ENCODE measurements at regions of chr2 and their contacts with region 1.

Region 1: DNA sequence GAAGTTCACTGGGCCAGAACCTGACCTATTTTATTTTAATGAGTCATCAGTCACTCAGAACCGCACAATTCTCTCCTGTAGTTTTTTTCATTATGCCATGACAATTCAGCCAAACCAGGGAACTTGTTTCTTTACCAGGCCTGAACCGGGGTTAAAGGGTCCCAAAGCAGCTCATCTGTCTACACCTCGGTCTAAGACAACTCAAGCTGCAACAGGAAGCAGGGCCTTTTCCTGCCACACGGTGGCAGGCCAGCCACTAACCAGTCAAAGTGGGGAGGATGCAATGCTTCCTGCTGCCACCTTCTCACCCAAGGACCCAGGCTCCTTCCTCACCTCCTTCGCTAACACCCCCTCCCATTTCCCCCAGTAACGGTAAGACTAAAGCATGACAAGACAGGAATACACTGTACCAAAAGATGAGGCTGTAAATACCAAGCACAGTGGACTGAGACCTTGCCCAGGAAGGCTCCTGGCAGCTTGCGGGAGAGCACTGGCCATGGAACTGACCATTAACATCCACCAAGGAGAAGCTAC is 56.7 kb upstream of the ACKR3 start:
- DNase-seq: peak; percentile 53
- H3K4me3 ChIP-seq: no peak overlapping the region
- H3K27ac ChIP-seq: no peak overlapping the region
- H3K4me1 ChIP-seq: no peaks in the 10 kb centered on the region
- H3K27me3 ChIP-seq: no peaks in the 10 kb centered on the region
- CTCF ChIP-seq: peak; percentile 75

Region 2: DNA sequence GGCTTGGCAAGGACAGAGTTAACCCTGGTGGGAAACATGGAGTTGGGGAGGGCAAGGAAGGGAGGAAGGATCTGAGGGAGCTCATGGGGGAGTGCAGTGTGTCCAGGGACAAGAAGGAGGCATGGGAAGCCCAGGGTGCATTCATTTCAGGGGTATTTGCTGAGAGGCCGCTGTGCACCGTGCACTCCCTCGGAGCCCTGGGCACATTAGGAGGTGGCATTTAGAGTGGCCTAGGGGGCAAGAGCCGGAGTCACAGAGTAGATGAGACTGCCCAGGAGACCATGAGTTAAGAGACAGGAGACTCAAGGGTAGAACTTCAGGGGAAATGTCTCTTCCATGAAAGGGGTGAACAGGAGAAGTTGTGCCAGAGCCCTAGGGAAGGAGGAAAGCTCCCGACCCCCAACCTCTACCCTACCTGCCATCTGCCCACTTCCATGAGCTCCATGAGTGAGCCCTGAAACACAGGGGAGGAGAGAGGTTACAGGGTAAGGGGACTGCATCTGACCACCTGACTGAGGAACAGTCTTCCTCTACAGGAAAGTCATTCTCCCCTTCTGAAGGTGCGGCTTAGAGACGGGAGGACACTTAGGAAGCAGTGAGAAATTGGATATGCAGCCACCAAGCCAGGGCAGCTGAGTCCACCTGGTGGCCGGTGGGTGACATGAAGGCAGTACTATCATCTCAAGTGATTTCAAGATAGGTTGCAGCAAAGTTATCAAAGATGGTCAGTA is 514.2 kb after region 1 on chr2:
- intact Hi-C with region 1: loop called (anchors 2 kb)
- DNase-seq: peak; percentile 71
- H3K4me3 ChIP-seq: no peak overlapping the region
- H3K27ac ChIP-seq: no peak overlapping the region
- H3K4me1 ChIP-seq: no peaks in the 10 kb centered on the region
- H3K27me3 ChIP-seq: no peaks in the 10 kb centered on the region
- CTCF ChIP-seq: peak; percentile 80

Region 3: DNA sequence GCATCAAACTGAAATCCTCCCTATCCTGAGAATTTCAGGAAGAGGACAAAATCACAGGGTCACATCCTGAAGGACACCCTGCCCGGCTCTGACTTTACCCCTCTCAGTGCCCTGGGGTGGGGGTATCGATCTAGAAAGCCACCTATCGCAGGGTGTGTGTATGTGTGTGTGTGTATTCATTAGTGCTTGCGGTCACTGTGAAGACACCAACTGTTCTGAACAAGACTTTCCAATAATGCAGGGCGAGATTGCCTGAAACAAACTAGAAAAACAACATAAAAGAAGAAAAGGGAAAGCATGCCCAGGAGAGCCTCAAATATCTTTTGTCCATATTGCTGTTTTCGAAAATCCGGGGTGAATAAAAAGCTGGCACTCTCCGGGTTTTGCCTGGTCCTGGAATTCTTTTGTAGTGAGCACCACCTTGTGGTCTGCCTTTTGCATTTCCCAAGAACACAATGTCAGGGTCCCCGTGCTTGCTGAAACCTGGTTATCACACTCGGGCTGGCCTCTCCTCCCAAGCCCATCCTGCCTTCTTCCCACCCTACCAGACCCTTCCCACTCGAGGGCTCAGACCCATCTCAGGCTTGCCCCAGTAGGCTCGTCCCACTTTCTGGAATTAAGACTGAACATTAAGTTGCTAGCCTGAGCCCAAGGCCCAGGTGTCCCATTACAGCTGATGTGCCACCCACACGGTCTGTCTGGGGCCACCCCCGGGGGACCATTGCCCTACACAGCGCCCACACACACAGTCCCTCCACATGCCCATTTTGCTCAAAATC is 547.8 kb after region 1 on chr2:
- intact Hi-C with region 1: loop called (anchors 2 kb)
- DNase-seq: peak; percentile 45
- H3K4me3 ChIP-seq: no peak overlapping the region
- H3K27ac ChIP-seq: no peak overlapping the region
- H3K4me1 ChIP-seq: no peaks in the 10 kb centered on the region
- H3K27me3 ChIP-seq: no peaks in the 10 kb centered on the region
- CTCF ChIP-seq: peak; percentile 38

Measured in colonic mucosa (tissue), 4 donors.